CD4-positive, alpha-beta memory T cell (primary cell): ENCODE measurements at regions of chr1 and their contacts with region 1.

Region 1: DNA sequence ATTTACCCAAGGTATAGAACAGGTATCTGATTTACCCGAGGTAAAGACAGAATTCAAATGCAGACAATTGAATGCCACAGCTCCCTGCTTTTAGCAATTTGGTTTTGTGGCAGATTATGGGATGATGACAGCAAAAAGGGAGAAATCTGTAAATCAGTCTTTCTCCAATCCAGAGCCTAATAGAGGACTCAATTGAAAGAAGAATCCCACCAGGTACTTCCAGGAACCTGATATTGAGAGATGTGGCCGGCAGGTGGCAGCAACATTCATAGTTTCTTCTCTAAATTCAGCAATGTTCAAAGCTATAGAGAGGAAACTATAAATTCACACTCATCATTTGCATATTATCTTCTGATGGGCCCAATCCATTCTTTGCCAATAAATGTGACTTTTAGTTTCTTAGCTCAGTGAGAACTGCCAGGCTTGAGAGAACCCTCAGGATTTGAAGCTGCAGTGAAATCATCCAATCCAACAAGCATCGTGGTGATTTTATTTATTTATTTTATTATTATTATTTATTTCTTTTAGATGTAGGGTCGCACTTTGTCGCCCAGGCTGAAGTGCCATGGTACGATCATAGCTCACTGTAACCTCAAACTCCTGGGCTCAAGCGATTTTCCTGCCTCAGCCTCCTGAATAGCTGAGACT is 9.8 kb upstream of the PHACTR4 start:
- DNase-seq: peak; percentile 54 to 73 (median 61)
- H3K4me3 ChIP-seq: no peak overlapping the region
- H3K4me3 Mint-ChIP-seq: no peak overlapping the region
- H3K27ac ChIP-seq: no peak overlapping the region
- H3K27ac Mint-ChIP-seq: no peak overlapping the region
- H3K4me1 ChIP-seq: no peaks in the 10 kb centered on the region
- H3K4me1 Mint-ChIP-seq: peaks cover 0 to 4% (median 2%) of the 10 kb centered on the region in 4 donors
- H3K27me3 ChIP-seq: no peaks in the 10 kb centered on the region
- H3K27me3 Mint-ChIP-seq: no peaks in the 10 kb centered on the region

Region 2: DNA sequence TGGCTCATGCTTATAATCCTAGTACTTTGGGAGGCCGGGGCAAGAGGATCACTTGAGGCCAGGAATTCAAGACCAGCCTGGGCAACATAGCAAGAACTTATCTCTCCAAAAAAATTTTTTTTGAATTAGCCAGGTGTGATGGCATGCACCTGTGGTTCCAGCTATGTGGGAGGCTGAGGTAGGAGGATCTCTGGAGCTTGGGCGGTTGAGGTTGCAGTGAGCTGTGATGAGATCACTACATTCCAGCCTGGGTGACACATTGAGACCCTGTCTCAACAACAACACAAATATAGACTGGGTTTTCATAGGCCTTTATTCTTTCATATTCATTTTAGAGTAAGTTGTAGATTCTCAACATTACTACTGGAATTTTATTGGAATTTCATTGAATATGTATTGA is 18.1 kb before region 1 on chr1:
- CTCF ChIA-PET with region 1: interaction called, 18 read pairs
- POLR2A ChIA-PET with region 1: no interaction called
- intact Hi-C with region 1: no loop called
- DNase-seq: no peak
- H3K4me3 ChIP-seq: no peak overlapping the region
- H3K4me3 Mint-ChIP-seq: no peak overlapping the region
- H3K27ac ChIP-seq: no peak overlapping the region
- H3K27ac Mint-ChIP-seq: no peak overlapping the region
- H3K4me1 ChIP-seq: no peaks in the 10 kb centered on the region
- H3K4me1 Mint-ChIP-seq: peaks cover 0 to 2% (median 0%) of the 10 kb centered on the region in 4 donors
- H3K27me3 ChIP-seq: no peaks in the 10 kb centered on the region
- H3K27me3 Mint-ChIP-seq: no peaks in the 10 kb centered on the region

Region 3: DNA sequence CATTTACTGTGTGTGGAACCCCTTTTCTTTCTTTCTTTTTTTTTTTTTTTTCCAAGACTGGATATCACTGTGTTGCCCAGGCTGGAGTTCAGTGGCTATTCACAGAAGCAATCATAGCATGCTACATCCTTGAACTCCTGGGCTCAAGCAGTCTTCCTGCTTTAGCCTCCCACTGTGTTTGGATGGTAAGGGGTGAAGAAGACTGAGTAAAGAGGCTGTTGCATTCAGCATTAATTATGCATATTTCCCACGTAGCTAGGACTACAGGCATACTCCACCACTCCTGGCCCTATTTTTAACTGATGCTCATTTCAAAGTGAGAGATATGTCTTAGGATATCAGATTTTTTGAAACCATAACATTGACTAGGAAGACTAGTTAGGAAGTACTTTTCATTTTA is 49.4 kb after region 1 on chr1:
- CTCF ChIA-PET with region 1: interaction called, 11 read pairs
- POLR2A ChIA-PET with region 1: no interaction called
- intact Hi-C with region 1: no loop called
- DNase-seq: no peak
- H3K4me3 ChIP-seq: no peak overlapping the region
- H3K4me3 Mint-ChIP-seq: no peak overlapping the region
- H3K27ac ChIP-seq: no peak overlapping the region
- H3K27ac Mint-ChIP-seq: no peak overlapping the region
- H3K4me1 ChIP-seq: peaks cover 11% of the 10 kb centered on the region
- H3K4me1 Mint-ChIP-seq: peaks cover 0 to 12% (median 6%) of the 10 kb centered on the region in 4 donors
- H3K27me3 ChIP-seq: no peaks in the 10 kb centered on the region
- H3K27me3 Mint-ChIP-seq: no peaks in the 10 kb centered on the region

Region 4: DNA sequence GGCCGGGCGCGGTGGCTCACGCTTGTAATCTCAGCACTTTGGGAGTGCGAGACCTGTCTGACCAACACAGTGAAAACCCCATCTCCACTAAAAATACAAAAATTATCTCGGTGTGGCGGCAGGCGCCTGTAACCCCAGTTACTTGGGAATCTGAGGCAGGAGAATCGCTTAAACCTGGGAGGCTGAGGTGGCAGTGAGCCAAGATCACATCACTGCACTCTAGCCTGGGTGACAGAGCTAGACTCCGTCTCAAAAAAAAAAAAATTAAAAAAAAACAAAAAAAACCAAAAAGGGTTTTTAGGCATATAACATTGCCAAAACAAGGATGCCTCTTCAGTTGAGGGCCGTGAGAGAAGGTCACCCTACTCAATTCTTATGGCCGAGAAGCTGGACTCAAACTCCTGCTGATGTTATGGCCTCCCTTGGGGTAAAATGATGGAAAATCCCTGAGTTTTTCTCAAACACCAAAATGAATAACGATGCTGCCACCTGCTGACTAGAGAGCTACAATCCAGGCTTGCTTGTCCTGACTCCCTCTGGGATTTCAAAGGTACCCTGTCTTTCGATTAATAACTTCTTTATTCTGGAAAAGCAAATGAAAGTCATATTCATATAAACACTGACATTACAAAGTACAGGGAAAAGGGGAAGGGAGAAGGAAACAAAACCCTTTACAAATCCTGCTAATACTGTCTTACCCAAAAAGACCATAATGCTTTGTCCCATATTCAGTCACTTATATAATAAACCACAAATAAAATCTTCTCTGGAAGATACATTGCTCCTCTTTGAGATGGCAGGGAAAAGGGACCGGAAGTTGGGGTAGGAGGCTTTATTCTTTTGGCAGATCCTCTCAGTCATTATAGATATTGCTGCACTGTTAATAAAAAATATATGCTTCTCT is 243.1 kb after region 1 on chr1:
- CTCF ChIA-PET with region 1: interaction called, 16 read pairs
- POLR2A ChIA-PET with region 1: no interaction called
- intact Hi-C with region 1: no loop called
- DNase-seq: peak in 3 of 5 donors; percentile 13 to 28 (median 25)
- H3K4me3 ChIP-seq: no peak overlapping the region
- H3K4me3 Mint-ChIP-seq: no peak overlapping the region
- H3K27ac ChIP-seq: no peak overlapping the region
- H3K27ac Mint-ChIP-seq: peak overlapping the region in 2 of 7 donors; percentile 10 to 77
- H3K4me1 ChIP-seq: no peaks in the 10 kb centered on the region
- H3K4me1 Mint-ChIP-seq: peaks cover 0 to 2% (median 0%) of the 10 kb centered on the region in 4 donors
- H3K27me3 ChIP-seq: no peaks in the 10 kb centered on the region
- H3K27me3 Mint-ChIP-seq: no peaks in the 10 kb centered on the region